Mammary epithelial cell (primary cell): ENCODE measurements at regions of chr13 and their contacts with region 1.

Region 1: GRCh38 chr13:40149611-40150274 is 494.3 kb downstream of the COG6 start:
- DNase-seq: peak; percentile 82
- H3K4me3 ChIP-seq: no peak overlapping the region
- H3K27ac ChIP-seq: no peak overlapping the region
- H3K4me1 ChIP-seq: peaks cover 7% of the 10 kb centered on the region
- H3K27me3 ChIP-seq: no peaks in the 10 kb centered on the region
- CTCF ChIP-seq: no peak

Region 2: DNA sequence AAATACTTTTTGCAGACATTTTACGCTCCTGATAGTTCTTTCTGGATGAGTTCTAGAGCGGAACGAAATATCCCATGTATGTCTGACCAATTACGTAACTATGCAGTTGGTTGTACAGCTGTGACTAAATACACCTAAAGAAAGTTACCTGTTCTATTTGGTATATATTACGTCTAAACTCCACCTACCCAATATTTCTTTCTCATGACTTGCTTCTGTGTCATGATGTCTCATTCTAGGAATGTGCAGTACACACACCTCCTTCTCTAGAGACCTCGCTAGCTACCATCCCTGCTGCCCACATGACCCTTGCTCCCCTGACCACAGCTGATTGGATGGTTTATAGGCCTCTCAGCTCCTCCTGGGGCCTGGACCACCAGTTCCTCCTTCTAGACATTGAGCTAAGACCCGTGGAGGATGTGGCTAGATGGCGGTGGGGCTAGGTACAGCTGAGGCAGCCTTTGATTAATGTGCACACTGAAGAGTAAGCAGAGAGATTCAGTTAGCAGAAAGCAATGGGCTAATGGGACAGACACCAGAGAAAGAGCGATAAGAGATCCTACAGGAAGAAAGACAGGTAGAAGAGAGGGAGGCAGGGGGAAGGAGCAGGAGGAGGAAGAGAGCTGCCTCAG is 72.2 kb before region 1 on chr13:
- CTCF ChIA-PET with region 1: no interaction called
- dilution Hi-C with region 1: no loop called
- in situ Hi-C with region 1: no loop called
- intact Hi-C with region 1: loop called (anchors 5 kb)
- DNase-seq: peak; percentile 83
- H3K4me3 ChIP-seq: no peak overlapping the region
- H3K27ac ChIP-seq: peak overlapping the region; percentile 17
- H3K4me1 ChIP-seq: peaks cover 15% of the 10 kb centered on the region
- H3K27me3 ChIP-seq: no peaks in the 10 kb centered on the region
- CTCF ChIP-seq: no peak

Region 3: GRCh38 chr13:40109356-40109844 is 40.3 kb before region 1 on chr13:
- CTCF ChIA-PET with region 1: no interaction called
- dilution Hi-C with region 1: no loop called
- in situ Hi-C with region 1: no loop called
- intact Hi-C with region 1: loop called (anchors 5 kb)
- DNase-seq: peak; percentile 97
- H3K4me3 ChIP-seq: peak overlapping the region; percentile 12 to 36 (median 28)
- H3K27ac ChIP-seq: peak overlapping the region; percentile 92
- H3K4me1 ChIP-seq: peaks cover 21% of the 10 kb centered on the region
- H3K27me3 ChIP-seq: no peaks in the 10 kb centered on the region
- CTCF ChIP-seq: no peak

Region 4: DNA sequence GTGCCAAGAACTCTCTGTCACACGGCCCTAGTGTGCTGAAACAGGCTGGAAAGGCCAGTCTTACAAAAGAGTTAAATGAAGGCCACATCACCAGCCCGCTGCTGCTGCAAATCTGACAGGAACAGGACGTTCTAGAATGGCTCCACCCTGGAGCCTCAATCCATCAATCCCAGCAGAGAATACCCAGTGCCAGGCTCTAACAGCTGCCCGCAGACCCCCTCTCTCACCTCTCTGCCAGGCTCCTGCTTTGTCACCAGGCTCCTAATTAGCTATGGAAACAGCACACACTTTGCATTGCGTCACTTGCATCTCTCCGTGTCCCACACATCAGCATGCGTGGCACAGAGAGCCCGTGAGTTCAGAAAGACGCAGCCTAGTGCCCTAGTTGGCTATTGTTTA is 202.6 kb after region 1 on chr13:
- CTCF ChIA-PET with region 1: no interaction called
- dilution Hi-C with region 1: no loop called
- in situ Hi-C with region 1: no loop called
- intact Hi-C with region 1: no loop called
- DNase-seq: no peak
- H3K4me3 ChIP-seq: no peak overlapping the region
- H3K27ac ChIP-seq: no peak overlapping the region
- H3K4me1 ChIP-seq: no peaks in the 10 kb centered on the region
- H3K27me3 ChIP-seq: no peaks in the 10 kb centered on the region
- CTCF ChIP-seq: no peak